ENCODE measurements at regions of chr6 and their contacts with region 1.

Region 1: DNA sequence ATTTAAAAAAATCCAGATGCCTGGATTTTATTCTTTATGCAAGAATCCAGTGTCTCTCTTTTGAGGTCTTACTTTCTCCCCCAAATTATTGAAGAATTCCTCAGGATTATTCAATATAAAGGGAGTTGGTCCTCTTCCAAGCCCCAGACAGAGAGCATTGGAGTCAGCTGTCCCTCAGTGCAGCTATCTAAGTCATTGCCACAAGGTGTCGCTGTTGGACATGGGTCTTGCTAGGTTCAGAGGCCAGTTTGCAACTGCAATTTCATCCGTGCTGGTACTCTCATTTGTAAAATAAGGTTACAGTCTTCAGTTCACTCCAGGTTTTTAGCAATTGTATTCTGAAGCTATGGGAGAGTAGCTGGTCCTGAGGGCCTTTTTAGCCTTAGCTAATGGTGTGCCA is 27.8 kb downstream of the CCN2 start:
- H3K4me3 ChIP-seq: no peak overlapping the region
- H3K27ac ChIP-seq: no peak overlapping the region
- H3K4me1 ChIP-seq: no peaks in the 10 kb centered on the region
- CTCF ChIP-seq: no peak

Region 2: GRCh38 chr6:131844243-131844841 is 79.0 kb before region 1 on chr6:
- CTCF ChIA-PET with region 1: no interaction called
- POLR2A ChIA-PET with region 1: no interaction called
- H3K4me3 ChIP-seq: no peak overlapping the region
- H3K27ac ChIP-seq: no peak overlapping the region
- H3K4me1 ChIP-seq: no peaks in the 10 kb centered on the region
- CTCF ChIP-seq: no peak

Region 3: GRCh38 chr6:131900231-131900630 is 23.1 kb before region 1 on chr6:
- CTCF ChIA-PET with region 1: interaction called, 13 read pairs
- POLR2A ChIA-PET with region 1: no interaction called
- H3K4me3 ChIP-seq: no peak overlapping the region
- H3K27ac ChIP-seq: no peak overlapping the region
- H3K4me1 ChIP-seq: no peaks in the 10 kb centered on the region
- CTCF ChIP-seq: no peak

Region 4: GRCh38 chr6:131949909-131950766 is 26.8 kb after region 1 on chr6:
- CTCF ChIA-PET with region 1: interaction called, 113 read pairs
- POLR2A ChIA-PET with region 1: interaction called, 9 read pairs
- H3K4me3 ChIP-seq: peak overlapping the region; percentile 73
- H3K27ac ChIP-seq: peak overlapping the region; percentile 74; the same call in 1 of the 2 replicates
- H3K4me1 ChIP-seq: peaks cover 23% of the 10 kb centered on the region
- CTCF ChIP-seq: peak; percentile 95

Region 5: GRCh38 chr6:132167929-132168892 is 244.9 kb after region 1 on chr6:
- CTCF ChIA-PET with region 1: interaction called, 15 read pairs
- POLR2A ChIA-PET with region 1: no interaction called
- H3K4me3 ChIP-seq: no peak overlapping the region
- H3K27ac ChIP-seq: no peak overlapping the region
- H3K4me1 ChIP-seq: no peaks in the 10 kb centered on the region
- CTCF ChIP-seq: no peak

Region 6: GRCh38 chr6:132227904-132228303 is 304.5 kb after region 1 on chr6:
- CTCF ChIA-PET with region 1: interaction called, 12 read pairs
- POLR2A ChIA-PET with region 1: no interaction called
- H3K4me3 ChIP-seq: no peak overlapping the region
- H3K27ac ChIP-seq: no peak overlapping the region
- H3K4me1 ChIP-seq: no peaks in the 10 kb centered on the region
- CTCF ChIP-seq: no peak

Region 7: GRCh38 chr6:132286026-132287019 is 363.0 kb after region 1 on chr6:
- CTCF ChIA-PET with region 1: interaction called, 34 read pairs
- POLR2A ChIA-PET with region 1: no interaction called
- H3K4me3 ChIP-seq: no peak overlapping the region
- H3K27ac ChIP-seq: no peak overlapping the region
- H3K4me1 ChIP-seq: no peaks in the 10 kb centered on the region
- CTCF ChIP-seq: no peak

Region 8: DNA sequence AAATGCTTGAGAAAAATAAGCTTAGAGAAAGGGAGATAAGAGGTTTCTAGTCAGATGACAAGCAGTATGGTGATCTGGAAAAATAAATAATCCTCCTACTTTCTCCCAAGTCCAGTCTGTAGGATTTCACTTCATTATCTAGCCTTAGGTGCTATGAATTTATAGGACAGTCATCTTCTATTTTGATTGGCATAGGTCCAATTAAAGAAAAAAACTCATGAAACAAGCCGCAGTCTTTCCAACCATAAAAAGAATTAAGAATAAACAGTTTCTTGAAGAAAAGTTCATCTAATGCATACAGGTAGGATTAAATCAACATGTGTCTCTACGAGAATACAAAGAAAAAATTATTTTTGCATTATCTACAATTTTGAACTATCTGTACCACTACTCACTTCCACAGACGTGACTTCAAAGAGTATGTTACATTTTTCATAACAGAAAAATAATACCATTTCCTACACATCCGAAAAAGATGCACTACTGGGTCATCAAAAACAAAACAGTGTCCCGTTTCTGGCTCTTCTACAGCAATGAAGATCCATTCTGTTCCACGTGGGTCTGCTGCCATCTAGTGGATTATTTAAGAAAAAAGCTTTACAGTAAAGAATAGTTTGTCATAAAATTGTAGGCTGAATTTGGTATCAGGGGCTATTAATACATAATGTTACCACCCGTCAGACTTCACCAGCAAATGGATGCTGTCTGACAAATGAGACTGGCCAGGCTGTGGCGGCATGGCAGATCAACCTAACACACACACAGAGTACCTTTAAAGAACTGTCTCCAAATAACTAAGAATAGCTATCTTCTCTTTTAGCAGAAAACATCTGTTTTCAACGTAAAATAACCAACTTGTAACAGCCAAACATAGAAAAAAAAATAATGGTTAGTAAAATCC is 560.7 kb after region 1 on chr6:
- CTCF ChIA-PET with region 1: interaction called, 12 read pairs
- POLR2A ChIA-PET with region 1: no interaction called
- H3K4me3 ChIP-seq: no peak overlapping the region
- H3K27ac ChIP-seq: no peak overlapping the region
- H3K4me1 ChIP-seq: peaks cover 5% of the 10 kb centered on the region
- CTCF ChIP-seq: peak; percentile 53